ENCODE measurements at regions of chr9 and their contacts with region 1.

Region 1: GRCh38 chr9:37913480-37914153 is 9.7 kb upstream of the SLC25A51 start:
- DNase-seq: peak; percentile 44 to 64
- ATAC-seq: peak; percentile 84 to 89
- H3K4me3 ChIP-seq: no peak overlapping the region
- H3K27ac ChIP-seq: no peak overlapping the region
- H3K4me1 ChIP-seq: no peaks in the 10 kb centered on the region
- H3K27me3 ChIP-seq: no peaks in the 10 kb centered on the region
- CTCF ChIP-seq: peak; percentile 92 to 98 (median 95)
- POLR2A ChIP-seq: no peak

Region 2: DNA sequence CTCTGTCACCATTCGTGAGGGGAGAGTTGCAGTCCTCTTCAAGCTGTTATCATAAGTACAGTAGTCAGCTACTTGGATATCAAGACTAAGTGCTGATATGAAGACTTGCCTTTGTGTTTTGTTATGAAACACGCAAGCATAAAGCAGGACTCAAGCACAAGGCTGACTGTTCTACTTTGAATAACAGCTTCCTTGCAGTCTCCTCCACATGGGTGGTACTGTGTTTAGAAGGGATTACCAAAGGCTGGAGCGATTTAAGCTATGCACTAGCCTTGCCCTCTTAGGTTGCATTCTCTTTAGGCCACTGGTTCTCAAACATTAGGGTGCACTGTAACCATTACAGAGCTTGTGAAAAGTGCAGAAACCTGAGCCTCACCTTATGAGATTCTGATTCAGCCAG is 51.1 kb before region 1 on chr9:
- in situ Hi-C with region 1: no loop called
- intact Hi-C with region 1: no loop called
- DNase-seq: no peak
- ATAC-seq: no peak
- H3K4me3 ChIP-seq: no peak overlapping the region
- H3K27ac ChIP-seq: no peak overlapping the region
- H3K4me1 ChIP-seq: no peaks in the 10 kb centered on the region
- H3K27me3 ChIP-seq: no peaks in the 10 kb centered on the region
- CTCF ChIP-seq: no peak
- POLR2A ChIP-seq: no peak

Region 3: DNA sequence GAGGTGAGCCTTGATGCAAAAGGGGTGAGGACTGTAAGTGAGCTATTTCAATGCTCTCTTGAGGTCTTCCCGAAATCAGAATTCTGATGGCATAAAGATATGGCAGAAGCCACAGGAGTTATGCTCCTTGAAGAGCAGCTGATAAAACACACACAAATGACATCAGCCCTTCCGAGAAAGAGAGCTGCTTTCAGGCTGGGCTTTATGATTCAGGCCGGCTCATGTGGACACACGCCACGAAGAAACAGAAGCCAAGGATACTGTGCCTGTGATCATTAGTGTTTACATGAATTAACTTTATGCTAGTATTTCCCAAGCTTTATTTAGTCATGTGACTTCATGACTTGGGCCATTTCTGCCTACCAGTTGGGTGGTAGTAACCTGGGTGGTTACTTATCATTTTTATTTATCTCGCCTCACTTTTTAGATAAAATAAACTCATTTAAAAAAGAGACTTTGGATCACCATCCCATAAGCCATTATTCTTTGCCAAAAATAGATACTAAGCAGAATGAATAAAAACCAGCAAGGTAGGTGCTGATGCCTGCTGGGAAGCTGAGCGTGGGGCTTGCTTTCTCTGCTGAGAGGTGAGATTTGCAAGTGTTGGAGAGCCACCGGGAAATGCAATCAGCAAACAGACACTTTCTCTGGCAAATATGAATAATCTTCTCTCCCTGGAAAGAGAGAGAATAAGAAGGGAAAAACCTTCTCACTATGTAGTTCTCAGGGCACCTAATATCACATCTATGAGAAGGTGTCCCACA is 63.3 kb after region 1 on chr9:
- in situ Hi-C with region 1: loop called in 1 of 4 experiments (anchors 10 kb)
- intact Hi-C with region 1: no loop called
- DNase-seq: no peak
- ATAC-seq: no peak
- H3K4me3 ChIP-seq: no peak overlapping the region
- H3K27ac ChIP-seq: no peak overlapping the region
- H3K4me1 ChIP-seq: no peaks in the 10 kb centered on the region
- H3K27me3 ChIP-seq: no peaks in the 10 kb centered on the region
- CTCF ChIP-seq: no peak
- POLR2A ChIP-seq: no peak

Region 4: GRCh38 chr9:38088006-38088925 is 174.6 kb after region 1 on chr9:
- in situ Hi-C with region 1: loop called in 1 of 4 experiments (anchors 10 kb)
- intact Hi-C with region 1: no loop called
- DNase-seq: peak; percentile 23 to 64
- ATAC-seq: peak; percentile 85 to 89
- H3K4me3 ChIP-seq: no peak overlapping the region
- H3K27ac ChIP-seq: peak overlapping the region in 2 of 4 donors; percentile 36 to 42
- H3K4me1 ChIP-seq: peaks cover 8 to 9% of the 10 kb centered on the region in 2 donors
- H3K27me3 ChIP-seq: no peaks in the 10 kb centered on the region
- CTCF ChIP-seq: peak; percentile 87 to 95 (median 90)
- POLR2A ChIP-seq: no peak

Region 5: DNA sequence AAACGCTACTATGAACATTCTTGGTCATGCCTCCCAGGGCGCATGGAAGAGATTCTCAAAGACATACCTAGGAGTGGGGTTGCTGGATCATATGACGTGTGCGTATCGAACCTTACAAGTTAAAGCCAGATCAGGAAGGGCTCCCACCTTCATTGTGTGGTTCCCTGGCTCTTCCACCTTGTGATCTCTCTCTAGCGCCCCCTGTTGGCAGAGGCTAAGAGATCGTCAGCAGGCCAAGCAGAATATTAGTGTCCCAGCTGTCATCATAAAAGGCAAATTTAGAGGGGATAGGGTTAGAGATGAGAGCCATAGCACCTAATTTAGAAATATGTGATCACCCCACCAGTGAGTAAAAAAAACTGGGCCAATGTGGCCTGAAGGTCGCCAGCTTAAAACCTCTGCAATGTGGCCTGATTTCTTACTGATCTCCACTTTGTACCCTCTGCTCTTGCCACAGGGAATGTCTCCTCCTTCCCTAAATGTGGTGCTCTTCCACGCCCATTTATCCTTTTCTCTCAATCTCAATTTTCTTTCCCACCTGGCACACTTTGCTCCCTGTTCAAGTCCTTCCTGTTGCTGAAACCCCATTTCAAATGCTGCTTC is 247.1 kb after region 1 on chr9:
- in situ Hi-C with region 1: loop called in 3 of 4 experiments (anchors 5 kb)
- intact Hi-C with region 1: loop called (anchors 2 kb)
- DNase-seq: peak; percentile 19 to 35
- ATAC-seq: peak; percentile 66 to 80
- H3K4me3 ChIP-seq: no peak overlapping the region
- H3K27ac ChIP-seq: no peak overlapping the region
- H3K4me1 ChIP-seq: peaks cover 0 to 3% of the 10 kb centered on the region in 2 donors
- H3K27me3 ChIP-seq: no peaks in the 10 kb centered on the region
- CTCF ChIP-seq: peak; percentile 48 to 86 (median 71)
- POLR2A ChIP-seq: no peak

Region 6: GRCh38 chr9:38380872-38381534 is 467.4 kb after region 1 on chr9:
- in situ Hi-C with region 1: no loop called
- intact Hi-C with region 1: loop called (anchors 5 kb)
- DNase-seq: peak; percentile 62 to 67
- ATAC-seq: peak; percentile 57 to 71
- H3K4me3 ChIP-seq: no peak overlapping the region
- H3K27ac ChIP-seq: peak overlapping the region; percentile 82 to 94 (median 90)
- H3K4me1 ChIP-seq: peaks cover 30% of the 10 kb centered on the region in 2 donors
- H3K27me3 ChIP-seq: no peaks in the 10 kb centered on the region
- CTCF ChIP-seq: no peak
- POLR2A ChIP-seq: no peak